PC-3 (cell line): ENCODE measurements at regions of chr14 and their contacts with region 1.

Region 1: DNA sequence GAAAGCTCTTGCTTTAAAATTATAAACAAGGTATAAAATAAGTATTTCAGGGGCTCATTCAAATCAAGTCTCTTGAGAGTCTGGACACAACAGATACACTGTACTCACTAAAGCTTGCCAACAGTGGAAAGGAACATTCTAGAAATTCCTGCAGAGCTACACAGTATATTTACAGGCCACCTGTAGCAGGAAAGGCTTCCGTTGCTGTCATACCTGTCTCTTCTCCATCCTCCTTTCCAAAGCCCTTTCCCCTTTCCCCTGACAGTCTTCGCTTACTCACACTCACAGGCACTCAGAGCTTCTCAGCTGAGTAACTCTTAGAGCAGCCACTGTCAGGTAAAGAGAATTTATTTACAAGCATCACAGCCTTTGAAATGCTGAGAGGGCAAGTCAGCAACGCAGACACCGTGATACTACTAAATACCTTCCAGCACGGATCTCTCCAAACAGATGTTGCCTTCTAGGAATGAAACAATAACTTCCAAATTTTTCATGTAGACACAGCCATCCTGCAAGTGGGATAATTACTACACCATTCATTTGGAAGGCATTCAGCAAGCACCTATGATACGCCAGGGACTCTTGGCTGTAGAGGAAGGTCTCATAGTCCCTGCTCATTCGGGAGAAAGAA is 167.9 kb downstream of the FOXN3 start:
- DNase-seq: peak; percentile 94
- ATAC-seq: peak; percentile 97
- H3K4me3 ChIP-seq: peak overlapping the region; percentile 39; the same call in 1 of the 2 replicates
- H3K27ac ChIP-seq: peak overlapping the region; percentile 23; the same call in 1 of the 2 replicates
- H3K4me1 ChIP-seq: peaks cover 35% of the 10 kb centered on the region
- H3K27me3 ChIP-seq: no peaks in the 10 kb centered on the region
- CTCF ChIP-seq: no peak

Region 2: DNA sequence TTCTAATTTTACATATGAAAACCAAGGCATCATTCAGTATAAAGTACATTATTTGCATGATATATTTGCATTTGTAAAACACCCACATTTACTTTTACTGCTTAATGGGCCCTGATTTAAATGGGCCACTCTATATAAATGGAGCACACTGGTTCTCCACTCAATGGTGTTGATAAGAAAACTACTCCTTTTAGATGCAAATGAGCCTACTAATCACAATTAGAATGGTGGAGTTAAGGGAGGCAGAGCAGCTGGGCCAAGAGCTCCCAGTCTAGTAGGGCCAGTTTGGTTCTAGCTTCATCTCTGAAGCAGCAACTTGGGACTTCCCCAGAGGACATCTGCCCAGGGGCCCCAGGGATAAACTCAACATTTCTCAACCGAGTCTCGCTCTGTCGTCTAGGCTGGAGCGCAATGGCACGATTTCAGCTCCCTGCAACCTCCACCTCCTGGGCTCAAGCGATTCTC is 47.1 kb after region 1 on chr14:
- CTCF ChIA-PET with region 1: no interaction called
- POLR2A ChIA-PET with region 1: no interaction called
- intact Hi-C with region 1: loop called (anchors 5 kb)
- DNase-seq: no peak
- ATAC-seq: no peak
- H3K4me3 ChIP-seq: no peak overlapping the region
- H3K27ac ChIP-seq: no peak overlapping the region
- H3K4me1 ChIP-seq: peaks cover 6% of the 10 kb centered on the region
- H3K27me3 ChIP-seq: no peaks in the 10 kb centered on the region
- CTCF ChIP-seq: no peak

Region 3: DNA sequence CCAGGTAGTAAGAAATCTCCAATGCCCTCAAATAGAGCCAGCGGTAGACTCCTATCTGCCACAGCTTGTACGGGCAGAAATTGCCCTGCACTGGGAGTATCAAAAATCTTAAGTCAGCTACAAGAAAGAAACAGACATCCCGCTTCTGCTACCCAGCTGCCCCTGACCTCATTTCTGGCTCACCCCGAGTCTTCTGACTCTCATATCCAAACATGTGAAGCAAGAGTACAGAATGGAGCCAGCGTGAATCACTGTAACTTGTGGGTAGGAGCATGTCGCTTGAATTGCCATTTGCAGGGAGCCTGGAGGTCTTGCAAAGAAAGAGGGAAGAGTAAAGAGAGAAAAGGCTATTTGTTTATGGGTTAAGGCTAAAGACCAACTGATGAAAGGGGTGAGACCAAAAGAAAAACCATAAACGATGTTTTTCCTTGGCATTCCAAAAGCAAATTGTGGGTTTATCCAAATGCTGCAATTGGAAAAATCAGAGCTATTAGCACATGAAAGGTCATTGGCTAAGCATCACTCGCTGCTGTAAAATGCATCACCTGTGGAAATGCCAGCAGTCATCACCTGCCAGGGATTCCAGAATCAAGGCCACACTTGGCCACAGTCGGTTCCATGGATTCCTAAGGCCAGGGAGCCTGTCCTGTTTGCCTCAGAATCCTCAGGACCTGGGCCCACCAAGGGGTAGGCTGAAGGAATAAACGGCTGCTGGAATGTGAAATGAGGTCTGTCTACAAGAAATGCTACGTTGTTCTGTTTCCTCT is 81.2 kb after region 1 on chr14:
- CTCF ChIA-PET with region 1: no interaction called
- POLR2A ChIA-PET with region 1: no interaction called
- intact Hi-C with region 1: loop called (anchors 1 kb)
- DNase-seq: no peak
- ATAC-seq: no peak
- H3K4me3 ChIP-seq: no peak overlapping the region
- H3K27ac ChIP-seq: no peak overlapping the region
- H3K4me1 ChIP-seq: peaks cover 22% of the 10 kb centered on the region
- H3K27me3 ChIP-seq: no peaks in the 10 kb centered on the region
- CTCF ChIP-seq: no peak